ENCODE measurements at regions of chr18 and their contacts with region 1.

Region 1: DNA sequence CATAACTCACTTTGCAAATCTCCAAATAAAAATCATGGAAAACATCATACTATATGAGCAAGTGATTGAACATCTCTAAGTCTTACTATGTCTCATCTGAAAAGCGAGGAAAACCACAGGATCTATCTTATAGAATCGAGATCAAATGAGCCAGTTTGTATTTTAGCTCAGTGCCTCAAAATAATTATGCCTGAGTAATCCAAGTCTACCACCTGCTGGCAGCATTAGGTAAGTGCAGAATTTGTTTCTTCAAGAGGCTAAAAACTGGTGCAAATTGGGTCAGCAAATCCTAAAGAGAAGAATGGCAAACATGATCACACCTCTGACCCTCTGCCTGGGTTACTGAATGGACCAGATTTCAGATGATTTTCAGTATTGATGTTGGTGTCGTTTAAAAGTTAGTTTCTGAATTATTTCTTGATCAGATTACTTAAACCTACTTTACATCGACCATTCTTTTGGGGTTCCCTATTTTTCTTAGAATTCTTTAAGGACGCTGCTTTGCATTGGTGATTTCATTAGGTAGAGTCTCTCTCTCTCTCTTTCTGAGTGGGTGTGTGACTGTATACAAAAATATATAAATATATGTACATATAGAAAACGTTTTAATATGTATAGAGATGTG is 12.7 kb upstream of the FHOD3 start:
- DNase-seq: no peak
- ATAC-seq: peak; percentile 53 to 76
- H3K4me3 ChIP-seq: no peak overlapping the region
- H3K27ac ChIP-seq: no peak overlapping the region
- H3K4me1 ChIP-seq: no peaks in the 10 kb centered on the region
- H3K27me3 ChIP-seq: peaks cover 4% of the 10 kb centered on the region
- CTCF ChIP-seq: peak; percentile 85

Region 2: DNA sequence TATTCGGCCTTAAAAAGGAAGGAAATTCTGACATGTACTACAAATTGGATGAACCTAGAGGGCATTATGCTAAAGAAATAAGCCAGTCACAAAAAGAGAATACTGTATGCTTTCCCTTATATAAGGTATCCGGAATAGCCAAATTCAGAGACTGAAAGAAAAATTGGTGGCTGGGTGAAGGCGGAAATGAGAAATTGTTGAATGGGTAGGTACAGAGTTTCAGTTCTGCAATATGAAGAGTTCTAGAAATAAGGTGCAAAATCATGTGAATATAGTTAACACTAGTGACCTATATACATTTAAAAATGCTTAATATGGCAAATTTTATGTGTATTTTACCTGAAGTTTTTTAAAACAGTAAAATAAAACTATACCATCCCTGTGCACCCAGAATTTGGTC is 269.2 kb before region 1 on chr18:
- intact Hi-C with region 1: loop called (anchors 10 kb)
- DNase-seq: no peak
- ATAC-seq: no peak
- H3K4me3 ChIP-seq: no peak overlapping the region
- H3K27ac ChIP-seq: no peak overlapping the region
- H3K4me1 ChIP-seq: no peaks in the 10 kb centered on the region
- H3K27me3 ChIP-seq: no peaks in the 10 kb centered on the region
- CTCF ChIP-seq: no peak

Region 3: GRCh38 chr18:36095936-36096519 is 188.8 kb before region 1 on chr18:
- intact Hi-C with region 1: loop called (anchors 5 kb)
- DNase-seq: no peak
- ATAC-seq: no peak
- H3K4me3 ChIP-seq: no peak overlapping the region
- H3K27ac ChIP-seq: no peak overlapping the region
- H3K4me1 ChIP-seq: no peaks in the 10 kb centered on the region
- H3K27me3 ChIP-seq: no peaks in the 10 kb centered on the region
- CTCF ChIP-seq: peak; percentile 56

Region 4: GRCh38 chr18:36211612-36212065 is 73.1 kb before region 1 on chr18:
- intact Hi-C with region 1: no loop called
- DNase-seq: no peak
- ATAC-seq: no peak
- H3K4me3 ChIP-seq: no peak overlapping the region
- H3K27ac ChIP-seq: no peak overlapping the region
- H3K4me1 ChIP-seq: no peaks in the 10 kb centered on the region
- H3K27me3 ChIP-seq: no peaks in the 10 kb centered on the region
- CTCF ChIP-seq: no peak